A549 (cell line): ENCODE measurements at regions of chr15 and their contacts with region 1.

Region 1: GRCh38 chr15:99076552-99077308 is 28.1 kb upstream of the SYNM start:
- DNase-seq: peak; percentile 80 to 91
- ATAC-seq: peak; percentile 94 to 95
- H3K4me3 ChIP-seq: peak overlapping the region; percentile 8; the same call in 2 of the 3 replicates
- H3K27ac ChIP-seq: peak overlapping the region; percentile 66 to 79
- H3K4me1 ChIP-seq: peaks cover 11% of the 10 kb centered on the region
- CTCF ChIP-seq: peak; percentile 97
- EP300 ChIP-seq: no peak
- POLR2A ChIP-seq: no peak
- RAD21 ChIP-seq: peak; percentile 98 to 100

Region 2: DNA sequence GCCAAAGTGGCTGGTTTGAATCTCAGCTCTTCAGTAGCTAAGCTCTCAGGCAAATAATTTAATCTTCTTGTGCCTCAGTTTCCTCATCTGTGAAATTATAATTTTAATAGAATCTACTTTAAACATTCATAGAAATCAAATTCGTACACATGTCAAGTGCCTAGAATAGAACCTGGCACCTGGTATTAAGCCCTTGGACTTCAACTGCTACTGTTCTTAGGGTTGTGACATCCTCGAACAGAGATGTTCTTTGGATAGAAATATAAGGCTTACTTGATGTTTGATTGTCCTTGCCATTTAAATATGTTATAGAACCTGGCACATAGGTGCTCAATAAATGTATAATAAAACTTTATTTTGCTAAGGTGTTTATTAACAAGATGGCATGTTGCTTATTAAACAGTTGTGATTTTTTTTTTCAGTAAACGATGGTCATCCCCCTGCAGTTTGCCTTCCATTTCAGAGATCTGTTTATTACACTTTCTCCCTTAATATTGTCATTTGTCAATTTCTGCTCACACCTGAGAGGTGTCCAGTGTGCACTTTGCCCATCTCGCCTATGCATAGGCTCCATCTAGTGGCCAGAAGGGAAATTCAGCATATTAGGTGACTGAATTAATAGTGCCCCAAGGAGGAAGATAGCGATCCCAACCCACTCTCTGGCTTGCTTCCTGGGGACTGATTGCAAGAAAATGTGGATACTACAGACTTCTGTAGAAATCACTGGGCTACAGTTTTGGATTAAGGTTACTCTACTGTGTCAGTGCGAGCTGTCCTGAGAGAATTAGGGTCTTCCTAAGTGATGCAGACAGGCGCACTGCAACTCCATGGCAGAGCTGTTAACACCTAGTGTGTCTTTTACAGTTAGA is 417.7 kb before region 1 on chr15:
- CTCF ChIA-PET with region 1: interaction called, 22 read pairs
- POLR2A ChIA-PET with region 1: no interaction called
- DNase-seq: peak; percentile 63 to 80
- ATAC-seq: peak; percentile 76 to 85
- H3K4me3 ChIP-seq: no peak overlapping the region
- H3K27ac ChIP-seq: peak overlapping the region in 1 of 2 experiments; percentile 45; a peak in 1 of 6 replicates
- H3K4me1 ChIP-seq: peaks cover 71% of the 10 kb centered on the region
- CTCF ChIP-seq: peak; percentile 94
- EP300 ChIP-seq: no peak
- POLR2A ChIP-seq: no peak
- RAD21 ChIP-seq: peak; percentile 75 to 82

Region 3: DNA sequence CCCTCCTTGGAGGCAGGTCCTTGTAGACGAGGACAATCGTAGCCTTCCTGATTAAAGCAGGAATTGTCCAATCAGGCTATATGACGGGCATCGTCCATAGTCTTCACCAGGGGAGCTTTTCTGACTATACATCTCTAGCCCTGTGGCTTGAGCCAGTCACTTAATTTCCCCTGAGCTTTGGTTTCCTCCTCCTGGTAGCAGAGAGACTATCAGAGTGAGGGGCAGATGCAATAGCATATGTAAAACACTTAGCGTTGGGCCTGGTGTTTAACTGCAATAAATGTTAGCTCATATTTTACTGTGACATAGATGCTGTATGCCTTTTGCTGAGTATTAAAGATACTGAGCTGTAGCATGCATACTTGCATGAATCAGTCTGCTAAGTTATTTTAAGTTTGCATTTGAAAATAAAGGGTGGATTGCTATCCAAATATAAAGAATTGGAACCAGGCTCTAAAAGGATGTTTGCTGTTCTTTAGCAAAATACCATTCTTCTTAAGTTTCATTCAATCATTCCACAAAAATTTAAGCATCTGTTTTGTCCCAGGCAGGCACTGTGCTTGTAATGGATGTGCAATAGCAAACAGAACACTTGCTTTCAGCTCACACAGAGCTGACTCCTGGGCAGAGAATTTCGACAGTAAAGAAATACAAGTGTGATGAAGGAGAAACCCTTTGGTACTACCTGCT is 220.4 kb before region 1 on chr15:
- CTCF ChIA-PET with region 1: interaction called, 14 read pairs
- POLR2A ChIA-PET with region 1: interaction called, 3 read pairs
- DNase-seq: peak in 1 of 2 experiments; percentile 77
- ATAC-seq: peak in 1 of 2 experiments; percentile 1; a peak in 3 of 6 replicates
- H3K4me3 ChIP-seq: no peak overlapping the region
- H3K27ac ChIP-seq: peak overlapping the region; percentile 95 to 97
- H3K4me1 ChIP-seq: peaks cover 88% of the 10 kb centered on the region
- CTCF ChIP-seq: no peak
- EP300 ChIP-seq: peak; percentile 77 to 92; a peak in 3 of 5 replicates
- POLR2A ChIP-seq: no peak
- RAD21 ChIP-seq: peak; percentile 2 to 30; a peak in 3 of 5 replicates

Region 4: GRCh38 chr15:98881526-98882520 is 194.9 kb before region 1 on chr15:
- CTCF ChIA-PET with region 1: interaction called, 10 read pairs
- POLR2A ChIA-PET with region 1: no interaction called
- DNase-seq: peak in 1 of 2 experiments; percentile 84
- ATAC-seq: peak; percentile 33 to 51; a peak in 3 of 6 replicates
- H3K4me3 ChIP-seq: no peak overlapping the region
- H3K27ac ChIP-seq: peak overlapping the region; percentile 95 to 97
- H3K4me1 ChIP-seq: peaks cover 96% of the 10 kb centered on the region
- CTCF ChIP-seq: peak; percentile 57
- EP300 ChIP-seq: no peak
- POLR2A ChIP-seq: no peak
- RAD21 ChIP-seq: peak; percentile 69 to 72

Region 5: DNA sequence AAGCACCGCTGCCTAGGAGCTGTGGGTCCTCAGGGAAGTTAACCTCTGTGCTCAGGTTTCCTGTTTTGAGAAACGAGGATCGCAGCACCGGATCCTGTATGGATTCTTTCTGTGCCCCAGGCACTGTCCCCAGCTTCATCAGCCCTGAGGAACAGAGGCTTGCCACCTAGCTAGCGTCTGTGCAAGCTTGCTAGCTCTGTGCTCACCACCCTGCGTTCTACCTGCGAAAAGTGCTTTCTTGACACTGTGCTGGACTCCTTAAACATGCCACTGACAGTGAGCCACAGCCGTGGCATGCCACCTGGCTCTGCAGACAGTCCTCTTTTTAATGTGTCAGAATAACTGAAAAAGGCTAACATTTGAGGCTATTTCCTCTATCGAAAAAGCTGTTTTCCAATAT is 70.6 kb before region 1 on chr15:
- CTCF ChIA-PET with region 1: no interaction called
- POLR2A ChIA-PET with region 1: no interaction called
- DNase-seq: no peak
- ATAC-seq: peak; percentile 17 to 27; a peak in 2 of 6 replicates
- H3K4me3 ChIP-seq: no peak overlapping the region
- H3K27ac ChIP-seq: no peak overlapping the region
- H3K4me1 ChIP-seq: peaks cover 10% of the 10 kb centered on the region; the same call in 2 of the 3 replicates
- CTCF ChIP-seq: no peak
- EP300 ChIP-seq: no peak
- POLR2A ChIP-seq: no peak
- RAD21 ChIP-seq: no peak

Region 6: DNA sequence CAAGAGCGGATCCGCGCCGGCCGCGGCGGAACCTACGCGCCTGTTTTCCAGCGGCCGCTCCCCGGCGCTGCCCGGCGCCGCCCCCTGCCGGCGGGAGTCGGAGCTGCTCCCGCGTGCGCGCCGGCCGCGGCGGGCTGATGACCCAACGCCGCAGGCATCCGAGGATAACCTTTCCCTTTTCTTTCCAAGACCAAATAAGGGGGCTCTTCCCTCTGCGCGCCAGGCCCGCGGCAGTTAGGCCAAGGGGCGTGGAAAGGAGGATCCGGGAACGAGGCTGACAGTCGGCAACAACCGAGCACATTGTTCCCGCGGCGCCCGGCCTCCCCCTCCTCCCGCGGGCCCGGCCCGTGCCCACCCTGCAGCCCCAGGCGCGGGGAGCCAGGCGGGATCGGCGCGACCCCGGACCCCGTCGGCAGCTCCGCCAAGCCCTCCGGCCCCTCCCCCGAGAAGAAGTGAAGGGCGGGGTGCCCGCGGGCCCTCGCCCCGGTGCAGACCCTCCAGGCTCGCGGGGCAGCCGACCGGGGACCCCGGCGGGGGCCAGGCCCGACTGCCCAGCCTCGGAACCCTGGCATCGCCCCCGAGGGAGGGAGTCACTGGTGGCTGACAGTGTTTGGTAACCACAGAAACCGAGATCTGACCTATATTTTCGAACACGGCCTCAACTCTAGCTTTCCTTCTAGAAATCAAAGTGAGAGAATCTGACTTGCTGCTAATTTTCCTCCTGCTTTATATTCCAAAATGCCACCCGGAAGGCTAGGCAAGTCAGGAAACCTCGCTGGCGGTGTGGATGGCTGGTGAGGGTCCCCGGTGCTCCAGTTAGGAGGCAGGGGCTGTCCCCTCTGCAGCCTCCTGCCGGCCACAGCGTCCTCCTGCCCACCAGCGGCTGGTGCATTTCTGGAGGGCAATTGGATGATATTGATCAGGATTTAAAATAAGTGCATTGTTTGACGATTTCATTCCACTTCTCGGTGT is 17.4 kb before region 1 on chr15:
- CTCF ChIA-PET with region 1: interaction called, 227 read pairs
- POLR2A ChIA-PET with region 1: no interaction called
- DNase-seq: peak; percentile 78 to 84
- ATAC-seq: peak; percentile 80 to 86
- H3K4me3 ChIP-seq: peak overlapping the region; percentile 51
- H3K27ac ChIP-seq: peak overlapping the region; percentile 87 to 95
- H3K4me1 ChIP-seq: peaks cover 14% of the 10 kb centered on the region; the same call in 2 of the 3 replicates
- CTCF ChIP-seq: peak; percentile 85
- EP300 ChIP-seq: peak in 1 of 2 experiments; percentile 47; a peak in 1 of 5 replicates
- POLR2A ChIP-seq: peak; percentile 30
- RAD21 ChIP-seq: peak; percentile 72 to 95

Region 7: DNA sequence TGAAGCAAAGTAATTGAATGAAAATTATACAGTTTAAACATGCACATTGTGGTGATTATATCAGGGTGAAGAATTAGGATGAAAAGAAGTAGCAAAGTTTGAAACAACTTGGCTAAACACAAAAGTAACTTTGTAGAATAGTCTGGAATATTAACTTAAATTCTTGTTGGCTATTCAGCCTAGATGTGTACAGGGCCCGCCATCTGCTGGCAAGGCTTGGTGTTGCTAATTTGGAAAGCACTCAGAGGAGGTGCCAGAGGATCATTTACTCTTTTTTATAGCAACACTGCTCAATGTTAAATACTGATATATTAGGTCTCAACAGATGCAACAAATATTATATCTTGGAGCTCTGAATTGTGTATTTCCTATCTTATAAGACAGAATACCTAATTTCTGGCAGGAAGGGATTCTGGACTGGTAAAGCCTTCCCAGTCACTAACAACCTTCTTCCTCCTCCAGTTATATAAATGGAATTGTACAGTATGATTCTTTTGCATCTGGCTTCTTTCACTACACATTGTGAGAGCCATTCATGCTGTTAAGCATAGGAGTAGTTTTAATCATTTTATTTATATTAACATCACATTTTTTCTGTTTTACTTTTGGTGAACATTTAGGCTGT is 136.6 kb after region 1 on chr15:
- CTCF ChIA-PET with region 1: interaction called, 11 read pairs
- POLR2A ChIA-PET with region 1: no interaction called
- DNase-seq: peak; percentile 72 to 75
- ATAC-seq: peak; percentile 92 to 96; a peak in 5 of 6 replicates
- H3K4me3 ChIP-seq: no peak overlapping the region
- H3K27ac ChIP-seq: no peak overlapping the region
- H3K4me1 ChIP-seq: peaks cover 16% of the 10 kb centered on the region
- CTCF ChIP-seq: peak; percentile 99
- EP300 ChIP-seq: no peak
- POLR2A ChIP-seq: no peak
- RAD21 ChIP-seq: peak; percentile 98